ENCODE measurements at regions of chr12 and their contacts with region 1.

Region 1: GRCh38 chr12:6280053-6280469 is 30.4 kb upstream of the PLEKHG6 start:
- DNase-seq: peak; percentile 79 to 93 (median 84)
- ATAC-seq: peak; percentile 68
- H3K4me3 ChIP-seq: no peak overlapping the region
- H3K27ac ChIP-seq: peak overlapping the region; percentile 94 to 99 (median 98)
- H3K4me1 ChIP-seq: peaks cover 38% of the 10 kb centered on the region
- H3K27me3 ChIP-seq: no peaks in the 10 kb centered on the region
- CTCF ChIP-seq: no peak
- POLR2A ChIP-seq: peak in 2 of 3 donors; percentile 32 to 54

Region 2: DNA sequence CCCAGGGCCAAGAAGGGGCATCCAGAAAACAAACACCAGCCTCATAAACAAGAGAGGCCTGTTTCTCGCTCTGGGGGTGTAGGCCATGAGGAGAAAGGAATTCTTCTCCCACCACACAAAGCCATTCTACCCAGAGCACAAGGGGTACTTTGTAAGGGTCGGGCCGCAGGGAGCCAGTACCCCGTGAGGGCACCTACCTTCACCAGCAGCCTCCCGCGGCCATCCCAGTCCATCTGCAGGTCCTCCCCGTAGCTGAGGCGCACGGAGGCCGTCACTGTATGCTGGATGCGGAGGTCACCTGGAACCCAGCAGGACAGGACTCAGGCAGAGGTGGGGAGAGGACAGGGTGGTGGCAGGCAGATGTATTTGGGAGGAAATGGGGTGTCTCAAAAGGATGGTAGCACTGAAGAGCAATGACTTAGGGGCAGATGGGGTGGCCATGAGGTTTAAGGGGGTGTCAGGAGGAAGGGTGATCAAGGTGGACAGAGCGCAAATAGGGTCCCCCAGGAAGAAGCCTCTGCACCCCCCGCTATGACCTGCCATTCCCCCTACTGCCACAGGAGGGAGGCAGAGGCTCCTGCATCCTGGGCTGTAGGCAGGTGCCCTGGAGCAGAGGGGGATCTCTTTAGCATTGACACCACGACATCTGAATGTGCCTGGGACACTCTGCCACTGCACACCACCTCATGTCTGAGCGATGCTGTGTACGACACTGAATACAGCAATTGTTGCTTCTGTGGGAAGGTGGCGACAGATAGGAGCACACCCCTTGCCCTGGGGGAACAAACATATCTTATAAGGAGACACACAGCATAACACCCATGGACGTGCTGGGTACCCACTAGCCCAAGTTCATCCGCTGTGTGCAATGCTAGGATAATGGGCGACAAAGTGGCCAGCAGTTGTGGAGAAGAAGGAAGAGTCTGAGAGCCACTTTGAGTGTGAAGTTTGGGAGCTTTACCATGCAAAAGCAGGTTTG is 217.0 kb before region 1 on chr12:
- intact Hi-C with region 1: loop called (anchors 5 kb)
- DNase-seq: peak; percentile 33 to 54 (median 52)
- ATAC-seq: peak; percentile 74
- H3K4me3 ChIP-seq: no peak overlapping the region
- H3K27ac ChIP-seq: no peak overlapping the region
- H3K4me1 ChIP-seq: no peaks in the 10 kb centered on the region
- H3K27me3 ChIP-seq: no peaks in the 10 kb centered on the region
- CTCF ChIP-seq: peak; percentile 68 to 93 (median 73)
- POLR2A ChIP-seq: no peak

Region 3: GRCh38 chr12:6187948-6188793 is 91.9 kb before region 1 on chr12:
- intact Hi-C with region 1: loop called (anchors 5 kb)
- DNase-seq: no peak
- ATAC-seq: no peak
- H3K4me3 ChIP-seq: no peak overlapping the region
- H3K27ac ChIP-seq: no peak overlapping the region
- H3K4me1 ChIP-seq: peaks cover under 1% of the 10 kb centered on the region
- H3K27me3 ChIP-seq: no peaks in the 10 kb centered on the region
- CTCF ChIP-seq: no peak
- POLR2A ChIP-seq: no peak